ENCODE measurements at regions of chr10 and their contacts with region 1.

Region 1: DNA sequence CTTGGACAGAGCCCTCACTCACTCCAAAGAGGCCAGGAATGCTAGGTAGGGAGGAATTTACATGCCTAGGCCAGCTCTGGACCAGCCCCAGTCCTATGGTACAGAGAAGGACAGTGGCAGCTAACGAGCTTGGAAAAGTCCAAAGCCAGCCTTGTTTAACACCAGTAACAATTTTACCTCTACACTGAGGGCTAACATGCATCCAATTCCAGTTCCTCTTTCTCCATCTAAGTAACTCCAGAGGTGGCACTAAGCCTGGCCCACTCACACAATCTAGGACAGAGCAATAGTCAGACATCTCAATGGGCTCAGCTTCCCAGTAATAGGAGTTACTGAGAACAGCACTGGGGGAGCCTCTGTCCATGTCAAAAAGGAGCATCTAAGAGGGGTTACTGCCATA is 5.7 kb upstream of the LCOR start:
- DNase-seq: no peak
- ATAC-seq: no peak

Region 2: GRCh38 chr10:96642973-96643372 is 183.5 kb before region 1 on chr10:
- intact Hi-C with region 1: loop called (anchors 5 kb)
- DNase-seq: peak; percentile 88
- ATAC-seq: peak; percentile 53

Region 3: DNA sequence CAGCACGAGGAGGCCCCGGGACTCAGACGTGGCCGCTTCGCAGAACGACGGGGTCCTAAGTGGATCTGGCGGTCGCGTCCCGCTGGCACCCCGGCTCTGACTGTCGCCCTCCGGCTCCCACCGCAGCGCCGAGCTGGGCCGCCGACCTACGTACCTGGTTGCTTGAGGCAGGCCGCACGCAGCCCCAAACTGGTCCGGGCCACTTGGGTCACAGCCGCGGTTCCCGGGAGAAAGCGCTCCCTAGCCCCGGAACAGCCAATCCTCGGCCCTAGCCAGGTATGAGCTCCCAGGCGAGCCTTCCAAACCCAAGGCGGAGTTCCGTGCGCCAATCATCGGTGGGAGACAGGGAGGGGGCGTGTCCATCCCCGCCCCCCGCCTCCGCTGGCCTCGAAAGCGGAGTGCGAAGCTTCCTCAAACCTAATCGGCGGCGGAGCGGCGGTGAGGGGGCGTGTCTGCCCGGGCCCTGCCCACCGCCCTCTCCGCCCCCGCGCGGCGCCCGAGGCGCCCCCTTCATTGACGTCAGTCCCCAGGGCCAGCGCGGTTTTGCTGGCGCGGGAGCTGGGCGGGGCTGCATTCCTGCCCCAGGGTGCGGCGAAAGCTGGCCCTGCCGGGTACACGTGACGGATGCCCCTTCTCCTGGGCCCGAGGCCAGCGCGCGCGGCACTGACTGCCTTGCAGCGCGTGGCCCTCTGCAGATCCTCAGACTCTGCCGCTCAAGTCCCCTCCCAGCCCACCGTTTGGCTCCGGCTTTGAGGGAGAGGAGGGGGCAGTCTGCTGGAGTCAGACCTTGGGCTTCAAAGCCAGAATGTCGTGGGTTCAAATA is 860.7 kb after region 1 on chr10 and contains the start of gene AVPI1:
- intact Hi-C with region 1: no loop called
- DNase-seq: peak; percentile 99
- ATAC-seq: peak; percentile 96
- total RNA-seq, gene AVPI1: 8.7 TPM

Measured in Right ventricle myocardium inferior (tissue), 1 donor.